Spleen (tissue), 13 donors: ENCODE measurements at regions of chr1 and their contacts with region 1.

Region 1: DNA sequence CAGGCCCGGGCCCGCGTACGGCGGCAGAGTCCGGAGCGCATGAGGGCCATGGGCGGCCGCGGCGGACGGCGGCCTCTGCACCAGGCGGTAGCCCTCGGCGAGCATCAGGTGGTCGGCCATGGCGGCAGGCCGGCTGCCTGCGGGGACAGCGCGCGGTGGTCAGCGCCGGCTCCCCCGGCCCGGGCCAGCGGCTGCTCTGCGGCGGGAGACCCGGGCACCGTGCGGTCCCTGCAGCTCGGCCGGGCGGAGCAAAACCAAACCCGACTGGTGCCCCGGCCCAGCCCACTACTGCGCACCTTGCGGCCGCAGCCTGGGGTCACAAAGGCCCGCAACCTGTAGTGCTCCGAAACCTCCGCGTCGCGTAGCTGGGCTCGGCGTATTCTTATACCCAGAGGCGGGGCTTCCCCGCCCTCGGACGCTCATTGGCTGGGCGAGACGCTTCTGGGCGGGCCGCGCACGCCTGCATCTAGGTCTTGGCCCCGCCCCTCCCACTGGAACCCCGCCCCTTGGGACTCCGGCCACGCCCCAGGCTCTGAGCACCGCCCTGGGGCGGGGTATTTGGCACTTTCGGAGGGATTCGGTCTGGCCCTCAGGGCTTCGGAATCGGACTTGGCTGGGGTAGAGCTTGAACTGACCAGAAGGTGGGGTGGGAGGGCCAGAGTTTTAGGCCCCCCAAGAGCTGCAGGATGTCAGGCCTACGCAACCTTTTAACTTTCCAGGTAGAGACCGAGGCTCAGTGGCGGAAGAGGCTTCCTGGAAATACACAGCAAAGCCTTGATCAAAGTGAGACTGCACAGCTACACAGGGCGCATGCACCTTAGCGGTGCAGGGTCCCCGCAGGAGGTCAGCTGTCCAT is at the start of gene CITED4:
- DNase-seq: peak; percentile 99
- H3K4me3 ChIP-seq: peak within 1 kb of the TSS; percentile 51 to 95 (median 72)
- H3K27ac ChIP-seq: peak within 1 kb of the TSS; percentile 68 to 92 (median 86)
- H3K4me1 ChIP-seq: peaks cover 0 to 37% (median 20%) of the 10 kb centered on the region in 6 donors
- H3K27me3 ChIP-seq: peaks cover 0 to 18% (median 0%) of the 10 kb centered on the region in 7 donors
- CTCF ChIP-seq: peak in 9 of 11 experiments; percentile 21 to 63 (median 49)
- POLR2A ChIP-seq: peak in 1 of 3 donors; percentile 89
- total RNA-seq, gene CITED4: 36.1 to 98.8 (median 50.4) TPM

Region 2: DNA sequence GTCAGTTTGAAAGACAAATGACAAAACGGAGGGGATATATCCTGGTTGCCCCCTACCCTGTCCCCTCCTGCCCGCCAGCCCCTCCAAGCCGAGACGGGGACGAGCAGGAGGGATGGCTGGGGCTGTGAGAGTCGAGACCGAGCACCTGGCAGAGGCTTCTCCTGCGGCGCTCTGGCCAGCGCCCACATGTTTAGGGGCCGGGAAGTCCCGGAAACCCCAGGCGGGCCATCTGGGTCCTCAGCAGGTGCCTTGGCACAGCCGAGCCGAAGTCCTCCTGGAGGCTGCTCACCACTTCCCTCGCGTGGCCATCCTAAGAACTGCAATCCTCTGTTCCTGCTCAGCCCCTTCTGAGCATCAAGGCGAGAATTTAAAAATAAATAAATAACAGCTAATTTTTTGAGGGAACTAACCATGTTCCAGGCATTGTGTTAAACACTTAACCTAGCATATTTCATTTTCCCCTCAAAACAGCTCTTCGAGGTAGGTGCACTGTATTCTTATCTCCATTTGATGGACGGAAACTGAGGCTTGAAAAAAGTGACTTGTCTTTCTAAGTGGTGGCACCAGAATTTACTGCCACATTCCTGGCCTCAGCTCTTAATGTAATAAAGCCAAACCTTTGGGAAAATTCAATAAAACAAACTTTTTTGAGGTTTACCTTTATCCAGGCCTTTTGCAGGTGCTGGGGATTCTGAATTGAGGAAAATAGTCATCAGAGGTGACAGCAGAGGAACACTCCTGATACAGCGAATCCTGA is 193.3 kb before region 1 on chr1:
- intact Hi-C with region 1: no loop called
- DNase-seq: peak; percentile 94
- H3K4me3 ChIP-seq: peak overlapping the region in 4 of 8 donors; percentile 14 to 57 (median 24)
- H3K27ac ChIP-seq: no peak overlapping the region
- H3K4me1 ChIP-seq: peaks cover 3 to 44% (median 29%) of the 10 kb centered on the region in 6 donors
- H3K27me3 ChIP-seq: no peaks in the 10 kb centered on the region
- CTCF ChIP-seq: peak; percentile 82 to 98 (median 94)
- POLR2A ChIP-seq: no peak

Region 3: DNA sequence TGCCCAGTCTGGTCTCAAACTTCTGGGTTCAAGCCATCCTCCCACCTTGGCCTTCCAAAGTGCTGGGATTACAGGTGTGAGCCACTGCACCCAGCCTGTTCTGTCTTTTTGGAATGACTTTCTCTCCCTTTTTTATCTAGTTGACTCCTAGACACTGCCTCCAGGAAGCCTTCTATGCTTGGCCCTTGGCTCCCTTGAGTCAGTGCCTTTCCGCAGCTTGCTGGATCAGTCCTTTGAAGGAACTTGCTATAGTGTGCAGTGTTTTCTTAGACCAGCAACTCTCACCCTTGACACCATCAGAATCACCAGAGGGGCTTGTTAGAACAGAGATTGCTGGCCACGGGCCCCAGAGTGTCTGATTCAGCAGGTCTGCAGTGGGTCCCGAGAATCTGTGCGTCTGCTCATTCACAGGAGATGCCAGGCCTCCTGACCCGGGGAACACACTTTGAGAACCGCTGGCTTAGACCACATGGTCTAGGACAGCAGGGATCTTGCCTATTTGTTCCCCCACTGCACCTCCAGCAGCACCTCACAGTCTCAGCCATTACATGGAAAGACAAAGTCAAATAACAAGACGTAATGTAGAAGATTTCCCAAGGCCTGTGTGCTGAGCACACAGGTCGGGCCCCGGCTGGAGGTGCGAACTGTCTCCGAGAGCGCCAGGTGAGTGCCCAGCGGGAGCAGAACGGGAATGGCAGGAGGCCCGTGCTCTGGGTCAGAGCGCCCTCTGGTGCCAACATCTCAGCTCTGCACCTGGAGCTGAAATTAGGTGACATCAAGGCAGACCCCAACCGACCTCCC is 89.9 kb after region 1 on chr1:
- intact Hi-C with region 1: loop called (anchors 5 kb)
- DNase-seq: peak; percentile 85
- H3K4me3 ChIP-seq: no peak overlapping the region
- H3K27ac ChIP-seq: no peak overlapping the region
- H3K4me1 ChIP-seq: peaks cover 0 to 39% (median 21%) of the 10 kb centered on the region in 6 donors
- H3K27me3 ChIP-seq: peaks cover 0 to 41% (median 4%) of the 10 kb centered on the region in 7 donors
- CTCF ChIP-seq: peak; percentile 45 to 89 (median 83)
- POLR2A ChIP-seq: no peak